ENCODE measurements at regions of chr14 and their contacts with region 1.

Region 1: GRCh38 chr14:55446218-55446654 is 5.8 kb upstream of the TBPL2 start:
- DNase-seq: no peak

Region 2: GRCh38 chr14:55333711-55334485 is 112.3 kb before region 1 on chr14:
- intact Hi-C with region 1: no loop called
- DNase-seq: no peak

Region 3: GRCh38 chr14:55482936-55483605 is 36.8 kb after region 1 on chr14:
- intact Hi-C with region 1: no loop called
- DNase-seq: no peak

Region 4: GRCh38 chr14:55572578-55572977 is 126.3 kb after region 1 on chr14:
- intact Hi-C with region 1: loop called (anchors 5 kb)
- DNase-seq: no peak

Region 5: DNA sequence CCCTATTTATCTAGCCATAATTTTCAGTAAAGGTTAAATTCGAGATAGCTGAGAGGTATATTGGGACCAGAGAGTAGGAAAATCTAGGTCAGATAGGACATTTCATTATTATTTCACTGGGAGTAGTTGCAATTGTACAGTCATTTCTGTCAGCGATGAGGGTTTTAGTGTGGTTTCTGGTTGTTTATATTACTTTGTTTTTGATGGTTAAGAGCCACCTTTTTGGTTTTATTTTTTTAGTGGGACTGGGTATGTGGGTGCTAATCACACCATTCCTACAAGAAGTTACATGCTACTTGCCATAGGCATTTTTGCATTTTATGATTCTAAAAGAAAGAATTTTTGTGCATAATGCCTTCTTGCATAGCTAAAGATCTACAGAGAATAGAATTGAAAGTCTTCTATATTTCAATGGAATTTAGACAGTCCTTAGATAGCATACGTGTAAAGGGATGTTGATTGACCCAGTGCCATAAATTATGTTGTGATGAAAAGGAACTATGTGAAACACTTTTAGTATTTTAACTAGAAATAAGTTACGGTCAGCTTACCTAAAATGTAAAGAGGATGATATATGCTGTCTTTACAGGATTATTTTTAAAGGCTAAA is 218.9 kb after region 1 on chr14:
- intact Hi-C with region 1: loop called (anchors 10 kb)
- DNase-seq: no peak

Measured in cardiac septum (tissue), 1 donor.